ENCODE measurements at regions of chr11 and their contacts with region 1.

Region 1: DNA sequence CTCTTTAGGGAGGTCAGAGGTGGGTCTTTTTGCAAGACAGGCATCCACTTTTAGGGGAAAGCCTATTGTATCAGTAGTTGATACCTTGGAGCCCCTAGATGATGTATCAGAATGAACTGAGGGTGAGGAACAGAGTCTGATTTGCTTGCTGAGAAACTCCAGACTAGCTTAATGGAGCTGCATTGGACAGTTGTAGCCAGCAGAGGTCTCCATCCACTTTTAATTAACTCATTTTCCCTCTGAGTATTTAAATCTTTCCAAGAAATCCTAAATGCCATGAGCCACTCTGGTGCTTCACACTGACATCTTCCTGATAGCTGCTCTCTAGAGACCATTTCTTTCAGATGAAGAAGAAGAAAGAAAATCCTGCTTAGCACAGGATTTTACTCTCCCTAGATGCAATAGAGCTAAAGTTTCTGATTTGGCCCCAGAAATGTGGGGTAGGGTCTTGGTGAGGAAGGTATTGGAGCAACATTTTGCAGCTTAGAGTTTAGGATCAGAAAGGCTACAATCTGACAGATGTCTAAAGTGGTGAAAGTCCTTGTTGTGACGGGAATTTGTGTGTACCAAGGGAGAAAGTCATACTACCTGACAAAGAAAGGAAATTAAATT is 38.0 kb downstream of the EXT2 start:
- DNase-seq: no peak
- H3K4me3 ChIP-seq: no peak overlapping the region
- H3K27ac ChIP-seq: no peak overlapping the region
- H3K4me1 ChIP-seq: no peaks in the 10 kb centered on the region
- H3K27me3 ChIP-seq: no peaks in the 10 kb centered on the region
- CTCF ChIP-seq: peak in 2 of 3 experiments; percentile 57 to 65; a peak in 2 of 4 replicates
- EP300 ChIP-seq: no peak
- POLR2A ChIP-seq: no peak
- RAD21 ChIP-seq: peak; percentile 75 to 83

Region 2: DNA sequence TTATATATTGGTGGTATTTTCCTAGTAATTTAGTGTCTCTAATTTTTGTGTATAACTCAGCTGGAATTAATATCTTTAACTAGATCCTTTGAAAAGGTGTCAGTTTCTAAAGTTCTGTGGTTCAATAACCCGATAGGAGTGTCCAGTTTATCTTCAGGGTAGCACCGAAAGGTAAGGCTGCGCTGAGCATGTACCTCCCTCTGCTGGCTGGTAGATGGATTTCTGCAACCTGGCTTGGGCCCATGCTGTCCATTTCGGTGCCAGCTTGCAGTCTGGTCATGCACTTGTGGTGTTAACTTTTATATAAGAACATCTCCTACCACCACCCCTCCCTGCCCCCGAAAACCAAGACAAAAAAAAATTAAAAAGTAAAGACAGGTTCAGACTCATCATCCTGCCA is 13.3 kb before region 1 on chr11:
- CTCF ChIA-PET with region 1: interaction called, 17 read pairs
- POLR2A ChIA-PET with region 1: interaction called, 3 read pairs
- DNase-seq: no peak
- H3K4me3 ChIP-seq: no peak overlapping the region
- H3K27ac ChIP-seq: no peak overlapping the region
- H3K4me1 ChIP-seq: no peaks in the 10 kb centered on the region
- H3K27me3 ChIP-seq: no peaks in the 10 kb centered on the region
- CTCF ChIP-seq: peak; percentile 57 to 75 (median 70)
- EP300 ChIP-seq: no peak
- POLR2A ChIP-seq: no peak
- RAD21 ChIP-seq: peak; percentile 61

Region 3: GRCh38 chr11:44256673-44257291 is 123.3 kb after region 1 on chr11:
- CTCF ChIA-PET with region 1: interaction called, 25 read pairs
- POLR2A ChIA-PET with region 1: no interaction called
- DNase-seq: no peak
- H3K4me3 ChIP-seq: no peak overlapping the region
- H3K27ac ChIP-seq: no peak overlapping the region
- H3K4me1 ChIP-seq: no peaks in the 10 kb centered on the region; a peak in 1 of 7 replicates
- H3K27me3 ChIP-seq: no peaks in the 10 kb centered on the region
- CTCF ChIP-seq: no peak
- EP300 ChIP-seq: no peak
- POLR2A ChIP-seq: no peak
- RAD21 ChIP-seq: no peak

Region 4: DNA sequence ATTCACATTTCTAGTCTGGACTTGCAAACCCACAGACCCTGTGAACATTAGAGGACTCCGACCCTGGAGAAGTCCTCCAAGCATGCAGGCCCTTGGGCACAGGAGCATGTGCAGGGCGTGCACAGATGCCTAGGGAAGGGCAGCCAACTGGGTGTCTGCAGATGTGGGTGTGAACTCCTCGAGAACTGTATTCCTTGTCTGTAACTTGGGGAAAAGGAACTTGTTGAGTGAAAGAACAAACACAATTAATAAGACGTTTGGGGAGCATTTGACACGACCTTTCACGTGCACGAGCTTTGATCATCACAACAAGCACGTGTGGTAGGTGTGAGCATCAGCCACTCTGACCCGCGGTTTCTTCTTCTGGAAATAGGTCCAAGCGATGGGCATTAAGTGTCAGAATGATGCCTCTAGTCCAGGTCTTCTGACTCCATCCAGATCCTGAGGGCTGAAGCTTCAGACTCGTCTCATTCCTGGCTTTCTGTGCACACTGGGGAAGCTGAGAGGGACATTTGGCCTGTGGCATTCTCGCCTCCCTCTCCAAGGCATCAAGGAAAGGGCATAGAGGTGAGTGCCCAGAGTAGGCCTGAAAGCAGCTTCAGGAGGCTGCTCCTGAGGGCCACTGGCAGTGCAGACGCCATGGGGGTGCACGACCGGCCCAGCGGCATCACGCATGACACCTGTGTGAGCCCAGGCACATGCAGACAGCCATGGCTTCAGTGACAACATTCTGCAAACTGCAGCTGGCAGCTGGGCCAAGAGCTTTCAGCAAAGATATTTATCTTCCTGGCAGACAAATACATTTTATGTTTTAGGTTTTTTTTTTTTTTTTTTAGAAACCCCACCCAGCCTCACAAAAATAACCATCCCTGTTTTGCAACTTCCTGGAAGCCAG is 144.0 kb after region 1 on chr11:
- CTCF ChIA-PET with region 1: interaction called, 17 read pairs
- POLR2A ChIA-PET with region 1: no interaction called
- DNase-seq: no peak
- H3K4me3 ChIP-seq: no peak overlapping the region
- H3K27ac ChIP-seq: no peak overlapping the region
- H3K4me1 ChIP-seq: no peaks in the 10 kb centered on the region
- H3K27me3 ChIP-seq: no peaks in the 10 kb centered on the region
- CTCF ChIP-seq: no peak
- EP300 ChIP-seq: no peak
- POLR2A ChIP-seq: no peak
- RAD21 ChIP-seq: no peak

Region 5: GRCh38 chr11:44305470-44306051 is 172.1 kb after region 1 on chr11:
- CTCF ChIA-PET with region 1: interaction called, 28 read pairs
- POLR2A ChIA-PET with region 1: no interaction called
- DNase-seq: no peak
- H3K4me3 ChIP-seq: peak overlapping the region; percentile 9 to 44 (median 22); a peak in 6 of 8 replicates
- H3K27ac ChIP-seq: no peak overlapping the region
- H3K4me1 ChIP-seq: peaks cover 0 to 26% (median 17%) of the 10 kb centered on the region in 4 experiments; a peak in 6 of 7 replicates
- H3K27me3 ChIP-seq: peaks cover 86 to 100% (median 98%) of the 10 kb centered on the region in 4 experiments
- CTCF ChIP-seq: no peak
- EP300 ChIP-seq: no peak
- POLR2A ChIP-seq: no peak
- RAD21 ChIP-seq: no peak

Measured in H1 (cell line).